ENCODE measurements at regions of chr5 and their contacts with region 1.

Region 1: GRCh38 chr5:119411935-119412602 is 40.2 kb upstream of the HSD17B4 start:
- DNase-seq: peak; percentile 63
- H3K4me3 Mint-ChIP-seq: peak overlapping the region; percentile 74
- H3K27ac Mint-ChIP-seq: peak overlapping the region; percentile 81
- H3K4me1 Mint-ChIP-seq: peaks cover 30% of the 10 kb centered on the region
- H3K27me3 Mint-ChIP-seq: no peaks in the 10 kb centered on the region
- CTCF ChIP-seq: peak; percentile 84

Region 2: GRCh38 chr5:119022017-119022745 is 389.9 kb before region 1 on chr5:
- CTCF ChIA-PET with region 1: interaction called, 29 read pairs
- intact Hi-C with region 1: loop called (anchors 1 kb)
- DNase-seq: no peak
- H3K4me3 Mint-ChIP-seq: no peak overlapping the region
- H3K27ac Mint-ChIP-seq: no peak overlapping the region
- H3K4me1 Mint-ChIP-seq: peaks cover 9% of the 10 kb centered on the region
- H3K27me3 Mint-ChIP-seq: no peaks in the 10 kb centered on the region
- CTCF ChIP-seq: peak; percentile 34

Region 3: GRCh38 chr5:119131530-119132313 is 280.3 kb before region 1 on chr5:
- CTCF ChIA-PET with region 1: no interaction called
- intact Hi-C with region 1: loop called (anchors 5 kb)
- DNase-seq: no peak
- H3K4me3 Mint-ChIP-seq: no peak overlapping the region
- H3K27ac Mint-ChIP-seq: peak overlapping the region; percentile 79
- H3K4me1 Mint-ChIP-seq: peaks cover 32% of the 10 kb centered on the region
- H3K27me3 Mint-ChIP-seq: no peaks in the 10 kb centered on the region
- CTCF ChIP-seq: no peak

Region 4: DNA sequence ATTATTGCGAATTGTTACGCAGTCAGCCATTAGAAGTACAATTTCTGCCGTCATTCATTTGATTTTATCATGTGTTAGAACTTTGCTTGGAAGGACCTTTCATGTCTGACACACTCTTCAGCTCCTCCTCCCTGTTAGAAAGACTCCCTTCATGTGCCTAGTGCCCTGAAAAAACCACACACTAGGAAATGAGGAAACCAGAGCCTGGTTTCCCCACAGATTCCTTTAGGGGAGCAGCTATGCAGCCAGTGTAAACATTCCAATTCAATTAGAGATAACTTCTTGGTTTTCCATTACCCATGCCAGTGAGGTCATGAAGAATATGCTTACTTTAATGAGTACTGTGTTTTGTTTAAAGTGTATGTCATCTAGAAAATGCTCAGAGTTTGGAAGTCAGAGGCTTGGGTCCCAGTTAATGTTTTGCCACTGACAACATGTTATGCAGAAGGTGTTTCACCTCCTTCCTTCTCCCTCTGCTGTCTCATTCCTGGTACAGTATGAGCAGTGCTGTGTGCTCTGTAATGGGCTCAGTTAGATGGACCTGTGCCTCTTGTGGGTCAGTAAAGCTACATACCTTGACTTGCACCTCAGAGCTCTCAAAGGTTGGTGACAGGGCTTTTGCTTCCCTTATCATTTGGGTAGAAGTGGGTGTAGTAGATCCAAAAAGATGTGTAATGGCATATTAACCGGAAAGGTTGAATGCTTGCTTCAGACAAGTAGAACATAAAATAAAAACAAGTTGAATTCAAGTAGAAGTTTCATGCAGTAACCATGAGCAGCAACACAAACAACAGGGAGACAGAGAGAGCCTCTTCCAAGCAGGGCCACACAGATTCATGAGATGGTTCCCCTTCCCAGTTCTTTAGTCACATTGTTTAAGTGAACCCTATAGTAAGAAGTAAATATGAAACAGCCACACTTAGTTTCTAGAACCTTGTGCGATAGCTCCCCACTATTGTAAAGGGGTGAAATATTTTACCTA is 108.9 kb before region 1 on chr5:
- CTCF ChIA-PET with region 1: interaction called, 3 read pairs
- intact Hi-C with region 1: loop called (anchors 5 kb)
- DNase-seq: peak; percentile 79
- H3K4me3 Mint-ChIP-seq: peak overlapping the region; percentile 69
- H3K27ac Mint-ChIP-seq: peak overlapping the region; percentile 97
- H3K4me1 Mint-ChIP-seq: peaks cover 72% of the 10 kb centered on the region
- H3K27me3 Mint-ChIP-seq: no peaks in the 10 kb centered on the region
- CTCF ChIP-seq: peak; percentile 4

Region 5: DNA sequence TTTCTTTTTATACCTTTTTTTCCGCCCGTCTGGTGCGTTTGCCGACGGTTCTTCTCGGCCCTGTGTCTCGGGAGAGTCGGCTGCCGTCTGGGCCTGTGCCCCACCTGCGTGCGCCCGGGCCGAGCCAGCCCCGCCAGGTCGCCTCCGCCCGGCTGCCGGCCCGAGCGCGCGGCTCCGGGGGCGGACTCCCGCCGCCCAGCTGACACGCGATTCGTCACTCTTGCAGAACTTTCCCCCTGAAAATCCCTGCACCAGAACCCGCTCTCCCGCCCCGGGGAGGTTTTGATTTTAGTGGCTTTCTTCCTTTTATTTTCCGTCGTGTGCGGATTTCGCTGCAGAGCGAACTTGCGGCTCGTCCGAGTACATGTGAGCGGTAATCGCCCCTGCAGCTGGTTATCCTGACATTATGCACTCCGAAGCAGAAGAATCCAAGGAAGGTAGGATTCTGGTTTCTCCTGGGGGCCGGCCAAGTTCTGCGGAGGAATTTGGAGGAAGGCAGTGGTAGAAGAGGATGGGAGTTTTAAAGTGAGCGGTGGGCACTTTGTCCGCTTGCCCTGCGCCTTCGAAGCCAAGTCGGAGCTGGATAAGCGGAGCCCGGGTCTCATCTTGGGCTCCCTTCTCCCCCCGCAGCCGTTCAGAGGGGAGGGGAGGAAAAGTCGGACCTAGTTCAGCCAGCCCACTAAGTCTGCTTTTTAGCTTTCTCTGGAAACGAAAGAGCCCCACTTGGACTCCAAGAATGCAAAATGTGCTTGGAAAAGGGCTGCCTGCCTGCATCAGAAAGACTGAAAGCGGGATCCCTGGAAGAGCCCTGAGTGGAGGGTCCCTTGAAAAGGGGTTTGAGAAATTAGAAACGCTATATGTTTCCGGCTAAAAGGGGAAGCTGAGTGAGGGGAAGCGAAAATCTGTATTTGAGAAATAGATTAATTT is 56.1 kb before region 1 on chr5 and contains the start of gene TNFAIP8:
- CTCF ChIA-PET with region 1: interaction called, 3 read pairs
- intact Hi-C with region 1: loop called (anchors 2 kb)
- DNase-seq: peak; percentile 69
- H3K4me3 Mint-ChIP-seq: peak within 1 kb of the TSS; percentile 96
- H3K27ac Mint-ChIP-seq: peak within 1 kb of the TSS; percentile 45
- H3K4me1 Mint-ChIP-seq: peaks cover 75% of the 10 kb centered on the region
- H3K27me3 Mint-ChIP-seq: no peaks in the 10 kb centered on the region
- CTCF ChIP-seq: no peak
- total RNA-seq, gene TNFAIP8: 24.2 and 30.6 TPM in 2 replicates

Region 6: DNA sequence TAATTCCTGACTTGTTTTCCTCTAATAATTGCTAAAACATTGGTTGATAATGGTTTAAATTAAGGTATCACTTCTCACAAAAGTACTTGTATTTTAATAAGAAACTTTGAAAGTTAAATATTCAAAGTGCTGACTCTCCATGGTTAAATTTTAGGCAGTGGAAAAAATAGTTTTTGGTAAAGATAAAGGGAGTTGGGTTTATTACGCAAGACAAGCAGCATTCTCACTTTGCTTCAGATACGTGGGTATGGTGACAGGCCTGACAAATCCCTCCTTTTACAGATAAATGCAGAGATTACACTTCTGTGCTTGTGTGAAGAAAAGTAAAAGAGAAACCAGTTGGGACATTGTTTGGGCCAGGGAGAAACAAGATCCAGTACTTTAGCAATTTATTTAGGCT is 202.8 kb after region 1 on chr5:
- CTCF ChIA-PET with region 1: no interaction called
- intact Hi-C with region 1: no loop called
- DNase-seq: no peak
- H3K4me3 Mint-ChIP-seq: no peak overlapping the region
- H3K27ac Mint-ChIP-seq: no peak overlapping the region
- H3K4me1 Mint-ChIP-seq: no peaks in the 10 kb centered on the region
- H3K27me3 Mint-ChIP-seq: no peaks in the 10 kb centered on the region
- CTCF ChIP-seq: no peak